Activated CD8-positive, alpha-beta T cell treated with anti-CD3 and anti-CD28 coated beads, Interleukin-2, amount 10 ng/mL, durations not matched to agents 7 days and 5 days (primary cell): ENCODE measurements at regions of chr12 and their contacts with region 1.

Region 1: GRCh38 chr12:57754411-57755193 is at the start of gene MARCHF9:
- DNase-seq: peak; percentile 90
- ATAC-seq: peak; percentile 46
- H3K4me3 Mint-ChIP-seq: peak within 1 kb of the TSS; percentile 80
- H3K27ac Mint-ChIP-seq: peak within 1 kb of the TSS; percentile 81
- H3K4me1 Mint-ChIP-seq: peaks cover 54% of the 10 kb centered on the region
- H3K27me3 Mint-ChIP-seq: no peaks in the 10 kb centered on the region
- total RNA-seq, gene MARCHF9: 23.6 to 24.4 TPM

Region 2: GRCh38 chr12:57765042-57765697 is 10.6 kb after region 1 on chr12:
- CTCF ChIA-PET with region 1: interaction called, 72 read pairs
- POLR2A ChIA-PET with region 1: interaction called, 5 read pairs
- DNase-seq: peak; percentile 67
- ATAC-seq: peak; percentile 84
- H3K4me3 Mint-ChIP-seq: peak overlapping the region; percentile 83
- H3K27ac Mint-ChIP-seq: peak overlapping the region; percentile 80
- H3K4me1 Mint-ChIP-seq: peaks cover 28% of the 10 kb centered on the region
- H3K27me3 Mint-ChIP-seq: peaks cover 12% of the 10 kb centered on the region

Region 3: DNA sequence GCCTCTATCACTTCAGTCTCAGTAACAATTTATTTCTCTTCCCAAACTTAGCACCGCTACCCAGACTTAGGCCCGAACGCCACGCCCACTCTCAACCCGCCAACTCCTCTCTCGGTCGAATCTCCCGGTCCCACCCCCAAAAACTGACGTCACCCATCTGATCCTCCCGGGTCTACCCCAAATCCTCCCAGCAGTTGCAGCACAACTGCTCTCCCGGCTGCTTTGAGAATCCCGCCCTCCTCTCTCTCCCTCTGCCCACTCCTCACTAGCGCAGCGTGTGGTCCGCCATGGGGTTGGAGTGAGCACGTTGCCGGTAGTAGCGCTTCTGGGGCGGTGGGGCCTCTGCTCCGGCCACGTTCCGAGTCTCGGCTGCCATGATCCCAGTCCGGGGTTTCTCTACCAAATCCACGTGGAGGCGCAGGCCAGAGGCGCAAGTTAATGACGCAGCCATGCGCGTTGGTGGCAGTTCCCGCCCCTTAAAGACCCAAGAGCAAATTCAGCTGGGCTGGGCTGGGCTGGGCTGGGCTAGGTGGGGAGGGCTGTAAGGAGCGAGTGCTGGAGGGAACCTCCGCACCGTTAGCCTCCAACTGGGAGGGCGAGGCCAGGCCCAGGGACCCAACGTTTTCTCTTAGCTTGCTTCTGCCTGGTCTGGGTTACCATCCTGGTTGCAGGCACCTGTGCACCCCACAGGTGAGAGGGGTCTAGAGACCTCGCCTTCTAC is 17.3 kb after region 1 on chr12 and contains the start of gene METTL1:
- CTCF ChIA-PET with region 1: interaction called, 72 read pairs
- POLR2A ChIA-PET with region 1: interaction called, 6 read pairs
- DNase-seq: peak; percentile 96
- ATAC-seq: peak; percentile 91
- H3K4me3 Mint-ChIP-seq: peak within 1 kb of the TSS; percentile 97
- H3K27ac Mint-ChIP-seq: peak within 1 kb of the TSS; percentile 98
- H3K4me1 Mint-ChIP-seq: peaks cover 22% of the 10 kb centered on the region
- H3K27me3 Mint-ChIP-seq: no peaks in the 10 kb centered on the region
- total RNA-seq, gene METTL1: 26.3 to 28.8 TPM

Region 4: GRCh38 chr12:57954768-57955167 is 200.2 kb after region 1 on chr12:
- CTCF ChIA-PET with region 1: no interaction called
- POLR2A ChIA-PET with region 1: no interaction called
- DNase-seq: no peak
- ATAC-seq: no peak
- H3K4me3 Mint-ChIP-seq: no peak overlapping the region
- H3K27ac Mint-ChIP-seq: no peak overlapping the region
- H3K4me1 Mint-ChIP-seq: no peaks in the 10 kb centered on the region
- H3K27me3 Mint-ChIP-seq: no peaks in the 10 kb centered on the region